Dendritic cell treated with granulocyte-macrophage colony-stimulating factor and Interleukin-4, amounts not matched to agents 40 ng/mL and 50 ng/mL, for 4 days (primary cell): ENCODE measurements at regions of chr12 and their contacts with region 1.

Region 1: GRCh38 chr12:123533672-123534643 is at the start of gene RILPL1:
- H3K4me3 Mint-ChIP-seq: peak within 1 kb of the TSS; percentile 80
- H3K27ac Mint-ChIP-seq: peak within 1 kb of the TSS; percentile 84
- H3K4me1 Mint-ChIP-seq: peaks cover 29% of the 10 kb centered on the region
- H3K27me3 Mint-ChIP-seq: peaks cover 72% of the 10 kb centered on the region

Region 2: GRCh38 chr12:123559468-123559867 is 25.5 kb after region 1 on chr12:
- intact Hi-C with region 1: loop called (anchors 2 kb)
- H3K4me3 Mint-ChIP-seq: no peak overlapping the region
- H3K27ac Mint-ChIP-seq: peak overlapping the region; percentile 77
- H3K4me1 Mint-ChIP-seq: peaks cover 30% of the 10 kb centered on the region
- H3K27me3 Mint-ChIP-seq: peaks cover 15% of the 10 kb centered on the region